ENCODE measurements at regions of chr11 and their contacts with region 1.

Region 1: DNA sequence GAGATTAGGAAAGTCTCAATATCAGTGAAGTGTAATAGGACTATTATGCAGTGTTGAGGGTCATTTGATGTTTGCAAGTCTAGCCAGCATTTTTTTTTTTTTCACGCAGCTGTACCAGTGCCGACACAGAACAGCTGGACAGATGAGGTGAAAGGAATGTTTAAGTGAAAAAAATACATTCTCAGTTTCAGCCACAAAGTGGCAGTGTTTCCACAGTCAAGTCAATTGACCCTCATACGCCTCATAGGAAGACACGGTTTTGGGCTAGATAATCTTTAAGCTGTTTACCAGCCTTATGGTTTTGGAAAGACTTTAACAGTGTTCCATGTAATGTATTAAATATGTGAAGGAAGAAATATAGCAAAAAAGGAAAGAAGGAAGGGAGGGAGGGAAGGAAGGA is 349.9 kb upstream of the ANO3 start:
- DNase-seq: no peak
- ATAC-seq: peak; percentile 87 to 95 (median 90)
- H3K4me3 ChIP-seq: no peak overlapping the region
- H3K27ac ChIP-seq: no peak overlapping the region
- H3K4me1 ChIP-seq: no peaks in the 10 kb centered on the region
- H3K27me3 ChIP-seq: no peaks in the 10 kb centered on the region
- CTCF ChIP-seq: peak; percentile 44 to 80 (median 63)
- POLR2A ChIP-seq: no peak

Region 2: DNA sequence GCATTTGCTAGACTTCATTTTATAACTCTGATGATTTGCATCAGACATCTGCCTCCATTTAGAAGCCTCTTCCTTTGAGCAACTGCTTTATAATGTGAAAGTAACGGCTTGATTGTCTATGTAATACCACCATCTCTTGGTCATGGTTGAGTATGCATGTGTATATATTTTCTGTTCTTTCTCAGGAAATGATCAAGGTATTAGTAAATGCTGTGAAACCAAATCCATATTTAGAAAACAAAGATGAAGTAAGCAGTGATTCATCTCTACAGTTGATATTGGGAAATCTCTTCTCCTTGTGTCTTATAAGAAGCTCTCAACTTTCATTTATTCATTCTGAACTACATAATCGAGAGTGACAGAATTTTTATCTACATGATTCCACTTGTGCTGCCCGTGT is 245.3 kb after region 1 on chr11:
- intact Hi-C with region 1: loop called in 1 of 2 experiments (anchors 10 kb)
- DNase-seq: no peak
- ATAC-seq: peak; percentile 84 to 98 (median 84)
- H3K4me3 ChIP-seq: no peak overlapping the region
- H3K27ac ChIP-seq: no peak overlapping the region
- H3K4me1 ChIP-seq: no peaks in the 10 kb centered on the region
- H3K27me3 ChIP-seq: no peaks in the 10 kb centered on the region
- CTCF ChIP-seq: peak; percentile 49 to 83 (median 54)
- POLR2A ChIP-seq: no peak